Heart right ventricle (tissue), 16 donors: ENCODE measurements at regions of chr10 and their contacts with region 1.

Region 1: DNA sequence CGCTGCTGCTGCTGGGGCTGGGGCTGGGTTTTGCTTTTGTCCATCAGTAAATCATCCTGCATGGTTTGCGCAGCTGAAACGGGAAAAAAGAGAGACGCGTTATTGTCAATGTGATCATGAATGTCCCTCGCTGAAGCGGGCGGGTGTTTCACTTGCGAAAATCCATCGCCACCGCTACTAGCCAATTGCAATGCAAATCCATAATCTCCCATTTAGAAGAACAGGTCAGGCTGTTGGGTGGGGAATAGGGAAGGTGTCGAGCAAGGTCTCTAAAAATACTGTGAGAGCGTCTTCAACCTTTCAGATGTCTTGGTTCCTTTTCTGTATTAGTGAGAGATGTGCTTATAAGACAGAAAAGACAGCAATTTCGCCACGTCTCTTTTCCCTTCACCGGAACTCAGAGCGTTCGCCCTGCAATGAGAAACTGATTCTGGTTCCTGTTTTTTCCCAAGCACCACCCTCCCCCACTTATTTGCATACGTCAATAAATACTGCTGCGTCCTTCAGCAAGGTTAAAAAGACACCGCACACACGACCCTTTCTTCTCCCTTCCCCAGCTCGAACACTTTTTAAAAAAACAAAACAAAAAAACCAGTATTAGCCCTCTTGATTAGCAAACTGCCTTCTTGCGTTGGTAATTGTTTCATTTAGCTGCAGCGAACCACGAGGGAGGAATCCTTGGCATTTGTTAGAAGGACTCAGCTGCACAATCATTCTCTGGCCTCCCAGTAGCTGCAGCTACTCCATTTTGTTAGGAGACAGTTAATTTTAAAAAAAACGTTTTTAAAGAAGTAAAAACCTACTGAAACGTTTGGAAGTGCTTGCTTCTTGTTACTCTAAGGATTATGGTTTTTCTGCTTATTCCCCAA is 50.4 kb downstream of the CPEB3 start:
- DNase-seq: peak in 1 of 2 donors; percentile 80
- ATAC-seq: peak; percentile 69 to 85 (median 80)
- H3K4me3 ChIP-seq: peak overlapping the region; percentile 58 to 91 (median 76)
- H3K27ac ChIP-seq: peak overlapping the region; percentile 77 to 94 (median 87)
- H3K4me1 ChIP-seq: peaks cover 3 to 64% (median 41%) of the 10 kb centered on the region in 9 donors
- H3K27me3 ChIP-seq: no peaks in the 10 kb centered on the region
- CTCF ChIP-seq: no peak

Region 2: DNA sequence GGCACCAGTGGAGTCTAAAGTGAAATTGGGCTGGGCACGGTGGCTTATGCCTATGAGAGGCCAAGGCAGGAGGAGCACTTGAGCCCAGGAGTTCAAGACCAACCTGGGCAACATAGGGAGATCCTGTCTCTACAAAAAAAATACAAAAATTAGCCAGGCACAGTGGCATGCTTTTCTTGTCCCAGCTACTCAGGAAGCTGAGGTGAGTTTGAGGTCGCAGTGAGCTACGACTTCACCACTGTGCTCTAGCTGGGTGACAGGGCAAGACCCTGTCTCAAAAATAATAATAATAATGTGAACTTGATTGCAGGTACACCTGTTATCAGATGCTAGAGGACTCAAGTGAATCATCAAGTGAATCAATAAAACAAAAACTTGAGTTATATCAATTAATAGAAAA is 208.9 kb before region 1 on chr10:
- intact Hi-C with region 1: no loop called
- DNase-seq: no peak
- ATAC-seq: no peak
- H3K4me3 ChIP-seq: no peak overlapping the region
- H3K27ac ChIP-seq: no peak overlapping the region
- H3K4me1 ChIP-seq: no peaks in the 10 kb centered on the region
- H3K27me3 ChIP-seq: no peaks in the 10 kb centered on the region
- CTCF ChIP-seq: no peak

Region 3: DNA sequence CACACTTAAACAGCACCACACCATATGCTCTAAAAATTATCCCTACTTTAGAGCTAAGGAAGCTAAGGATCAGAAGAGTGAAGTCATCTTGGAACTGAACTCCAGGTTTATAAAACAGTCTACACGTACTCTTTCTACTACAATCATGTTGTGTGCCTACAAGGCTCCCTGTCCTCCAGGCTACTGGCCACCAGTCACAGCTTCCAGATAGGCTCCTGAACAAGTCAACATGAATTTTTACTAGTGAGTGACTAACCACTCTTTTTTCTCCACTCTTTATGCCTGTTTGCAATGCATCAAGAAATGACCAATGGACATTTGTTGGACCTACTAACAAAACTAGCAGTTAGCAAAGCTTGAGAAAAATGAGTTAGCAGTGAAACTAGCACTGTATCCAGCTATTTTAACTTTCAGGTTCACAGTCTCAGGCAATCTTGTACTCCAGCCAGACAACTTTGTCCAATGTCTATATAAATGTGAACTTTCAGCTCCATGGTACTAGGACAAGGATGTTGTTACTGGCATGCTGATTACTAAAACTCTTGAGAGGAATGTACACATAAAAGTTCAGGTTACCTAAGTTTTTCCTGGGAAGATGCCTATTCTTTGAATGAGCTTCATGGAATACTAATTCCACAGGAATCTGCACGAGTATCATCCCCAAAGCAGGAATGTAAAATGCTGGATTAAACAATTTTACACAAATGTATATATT is 137.0 kb before region 1 on chr10:
- intact Hi-C with region 1: loop called in 2 of 10 experiments (anchors 10 kb)
- DNase-seq: no peak
- ATAC-seq: no peak
- H3K4me3 ChIP-seq: no peak overlapping the region
- H3K27ac ChIP-seq: no peak overlapping the region
- H3K4me1 ChIP-seq: peaks cover 12 to 55% (median 40%) of the 10 kb centered on the region in 9 donors
- H3K27me3 ChIP-seq: no peaks in the 10 kb centered on the region
- CTCF ChIP-seq: no peak

Region 4: DNA sequence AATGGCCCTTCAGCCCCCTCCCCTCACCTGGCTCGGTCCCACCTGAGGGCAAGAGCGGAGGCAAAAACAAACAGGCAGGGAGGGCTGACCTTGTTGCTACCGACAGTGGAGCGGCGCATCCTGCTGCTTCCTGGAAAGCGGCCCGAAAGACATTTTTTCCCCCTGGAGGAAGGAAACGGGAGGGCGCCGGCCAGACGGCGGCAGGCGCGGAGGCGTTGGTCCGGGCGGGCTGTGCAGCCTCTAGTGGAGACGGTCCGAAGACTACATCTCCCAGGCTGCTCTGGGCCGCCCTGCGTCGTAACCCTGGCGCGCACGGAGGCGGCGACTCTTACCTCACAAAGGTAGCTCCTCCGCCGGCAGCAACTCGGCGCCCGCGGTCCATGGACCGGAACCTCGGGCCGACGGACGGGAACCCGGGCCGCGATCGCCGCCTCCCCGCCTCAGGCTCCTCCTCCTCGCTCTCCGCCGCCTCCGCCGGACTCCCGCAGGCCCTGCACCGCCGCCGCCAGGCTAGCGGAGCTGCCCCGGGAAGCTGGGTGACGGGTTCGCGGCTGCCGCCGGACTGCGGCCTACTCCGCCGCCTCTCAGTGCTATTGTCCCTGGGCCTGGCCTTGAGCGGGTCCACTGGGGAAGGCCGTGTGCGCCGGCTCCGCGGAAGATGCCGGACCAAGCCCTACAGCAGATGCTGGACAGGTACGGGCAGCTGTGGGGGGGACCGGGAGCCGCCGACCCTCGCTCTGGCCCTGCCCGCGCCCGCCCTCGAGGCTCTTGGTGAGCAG is 50.5 kb after region 1 on chr10 and contains the starts of genes CPEB3 and MARCHF5:
- intact Hi-C with region 1: loop called in 9 of 10 experiments (anchors 2 to 5 kb)
- DNase-seq: peak; percentile 96
- ATAC-seq: peak; percentile 99
- H3K4me3 ChIP-seq: peak within 1 kb of the TSS; percentile 79 to 99 (median 98)
- H3K27ac ChIP-seq: peak within 1 kb of the TSS; percentile 87 to 99 (median 96)
- H3K4me1 ChIP-seq: peaks cover 0 to 35% (median 17%) of the 10 kb centered on the region in 9 donors
- H3K27me3 ChIP-seq: no peaks in the 10 kb centered on the region
- CTCF ChIP-seq: peak; percentile 49 to 76 (median 64)
- total RNA-seq, gene CPEB3: 7.2 to 17.6 (median 13.7) TPM
- total RNA-seq, gene MARCHF5: 25.6 to 40.1 (median 33.9) TPM